Uterus (tissue), 4 donors: ENCODE measurements at regions of chr10 and their contacts with region 1.

Region 1: DNA sequence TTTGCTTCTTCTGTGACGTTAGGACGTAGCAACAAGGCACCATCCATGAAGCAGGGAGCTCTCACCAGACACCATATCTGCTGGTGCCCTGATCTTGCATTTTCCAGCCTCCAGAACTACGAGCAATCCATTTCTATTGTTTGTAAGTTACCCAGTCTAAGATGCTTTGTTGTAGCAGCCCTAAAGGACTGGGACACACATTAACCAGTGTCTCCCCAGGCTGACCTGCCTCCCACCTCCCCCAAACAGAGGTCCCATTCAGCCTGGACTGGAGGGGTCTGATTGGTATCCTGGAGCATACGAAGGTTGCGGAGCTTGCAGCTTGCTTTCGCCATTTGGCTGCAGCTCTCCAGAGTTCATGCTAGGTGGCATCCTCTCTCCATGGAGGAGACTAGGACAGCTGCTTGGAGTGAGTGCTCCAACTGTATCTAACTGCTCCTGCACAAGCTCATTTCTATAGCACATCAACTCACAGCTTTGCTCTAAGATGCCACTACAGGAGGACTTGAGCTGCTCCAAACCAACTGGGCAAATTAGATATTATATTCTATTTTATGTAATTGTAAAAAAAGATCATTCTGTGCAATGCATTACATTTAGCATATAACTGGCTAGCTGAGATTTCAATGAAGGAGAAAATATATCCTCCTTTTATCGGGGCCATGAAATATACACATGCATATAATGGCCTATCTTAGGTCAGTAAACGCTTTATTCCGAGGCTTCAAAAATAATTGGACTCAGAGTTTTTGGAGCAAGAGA is 8.0 kb upstream of the GRK5 start:
- DNase-seq: peak; percentile 63 to 72
- H3K4me3 ChIP-seq: no peak overlapping the region
- H3K27ac ChIP-seq: no peak overlapping the region
- H3K4me1 ChIP-seq: no peaks in the 10 kb centered on the region
- H3K27me3 ChIP-seq: no peaks in the 10 kb centered on the region
- CTCF ChIP-seq: peak; percentile 79 to 91 (median 88)
- POLR2A ChIP-seq: no peak

Region 2: GRCh38 chr10:118970770-118971169 is 228.6 kb before region 1 on chr10:
- intact Hi-C with region 1: no loop called
- DNase-seq: no peak
- H3K4me3 ChIP-seq: no peak overlapping the region
- H3K27ac ChIP-seq: no peak overlapping the region
- H3K4me1 ChIP-seq: no peaks in the 10 kb centered on the region
- H3K27me3 ChIP-seq: no peaks in the 10 kb centered on the region
- CTCF ChIP-seq: no peak
- POLR2A ChIP-seq: no peak

Region 3: DNA sequence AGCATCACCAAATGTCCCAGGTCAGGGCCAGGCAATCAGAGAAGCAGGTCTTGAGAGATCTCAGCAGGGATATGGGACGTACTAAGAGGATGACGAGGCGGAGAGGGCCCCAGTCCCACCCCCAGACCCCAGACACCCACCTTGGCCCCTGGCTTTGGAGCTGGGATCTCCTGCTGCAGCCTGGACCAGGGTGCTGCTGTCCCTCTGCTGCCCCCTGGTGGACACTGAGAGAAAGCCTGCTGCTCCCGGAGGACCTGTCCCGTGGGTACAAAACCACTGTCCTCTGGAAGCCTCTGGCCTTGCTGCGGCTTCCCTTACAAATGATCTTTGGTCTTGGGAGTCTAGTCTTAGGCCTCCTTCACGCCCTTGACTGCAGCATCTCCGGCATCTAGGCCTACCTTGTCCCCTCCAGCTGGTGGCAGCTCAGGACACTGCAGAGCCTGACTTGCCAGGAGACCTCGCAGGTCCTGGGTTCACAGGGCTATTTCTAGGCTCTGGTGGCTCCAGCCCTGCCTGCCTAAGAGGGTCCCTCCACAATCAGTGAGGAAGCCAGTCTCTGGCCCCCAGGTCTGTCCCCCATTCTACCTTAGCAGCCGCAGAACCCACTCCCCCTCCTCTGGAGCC is 246.0 kb after region 1 on chr10:
- intact Hi-C with region 1: loop called (anchors 2 kb)
- DNase-seq: peak; percentile 84 to 88
- H3K4me3 ChIP-seq: no peak overlapping the region
- H3K27ac ChIP-seq: no peak overlapping the region
- H3K4me1 ChIP-seq: peaks cover 0 to 5% of the 10 kb centered on the region in 2 donors
- H3K27me3 ChIP-seq: no peaks in the 10 kb centered on the region
- CTCF ChIP-seq: peak; percentile 92 to 99 (median 95)
- POLR2A ChIP-seq: no peak